Activated T-helper 2 cell treated with anti-CD3 and anti-CD28 coated beads, Interferon-gamma antibody, Interleukin-2, Interleukin-4, amounts not matched to agents 10 μg/mL and 5 μg/mL and 100 μg/mL, durations not matched to agents 14 hours and 24 hours and 36 hours (primary cell): ENCODE measurements at regions of chr6 and their contacts with region 1.

Region 1: DNA sequence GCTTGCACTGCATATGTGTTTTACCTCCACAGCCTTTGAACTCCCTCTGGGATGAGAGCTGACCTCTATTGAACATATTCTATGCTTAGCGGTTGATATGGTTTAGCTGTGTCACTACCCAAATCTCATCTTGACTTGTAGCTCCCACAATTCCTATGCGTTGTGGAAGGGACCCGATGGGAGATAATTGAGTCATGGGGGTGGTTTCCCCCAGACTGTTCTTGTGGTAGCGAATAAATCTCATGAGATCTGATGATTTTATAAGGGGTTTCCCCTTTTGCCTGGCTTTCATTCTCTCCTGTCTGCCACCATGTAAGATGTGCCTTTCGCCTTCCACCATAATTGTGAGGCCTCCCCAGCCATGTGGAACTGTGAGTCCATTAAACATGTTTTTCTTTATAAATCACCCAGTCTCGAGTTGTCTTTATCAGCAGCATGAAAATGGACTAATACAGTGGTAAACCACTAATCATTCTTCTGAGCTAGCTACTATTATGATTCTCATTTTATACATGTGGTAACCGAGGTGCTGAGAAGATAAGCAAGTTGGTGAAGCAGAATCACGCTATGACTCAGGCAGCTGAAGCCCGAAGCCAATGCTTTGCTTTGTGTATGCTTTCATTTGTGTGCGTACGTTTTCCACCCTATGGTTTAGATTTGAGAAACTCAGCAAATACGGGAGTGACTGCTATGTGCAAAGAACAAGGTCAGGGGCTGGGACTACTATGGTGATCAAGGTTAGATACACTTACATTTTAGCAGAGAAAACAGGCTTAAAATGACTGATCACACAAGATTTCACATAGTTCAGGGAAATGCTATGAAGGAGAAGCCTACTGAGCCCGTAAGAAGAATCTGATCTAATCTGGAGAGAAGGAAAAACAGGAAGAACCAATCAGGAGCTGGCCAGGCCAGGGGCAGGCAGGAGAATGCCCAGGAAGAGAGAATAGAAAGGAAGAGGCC is 363.5 kb downstream of the ESR1 start:
- DNase-seq: peak; percentile 68
- H3K4me3 Mint-ChIP-seq: peak overlapping the region; percentile 38
- H3K27ac Mint-ChIP-seq: peak overlapping the region; percentile 93
- H3K4me1 Mint-ChIP-seq: peaks cover 27% of the 10 kb centered on the region
- H3K27me3 Mint-ChIP-seq: no peaks in the 10 kb centered on the region

Region 2: DNA sequence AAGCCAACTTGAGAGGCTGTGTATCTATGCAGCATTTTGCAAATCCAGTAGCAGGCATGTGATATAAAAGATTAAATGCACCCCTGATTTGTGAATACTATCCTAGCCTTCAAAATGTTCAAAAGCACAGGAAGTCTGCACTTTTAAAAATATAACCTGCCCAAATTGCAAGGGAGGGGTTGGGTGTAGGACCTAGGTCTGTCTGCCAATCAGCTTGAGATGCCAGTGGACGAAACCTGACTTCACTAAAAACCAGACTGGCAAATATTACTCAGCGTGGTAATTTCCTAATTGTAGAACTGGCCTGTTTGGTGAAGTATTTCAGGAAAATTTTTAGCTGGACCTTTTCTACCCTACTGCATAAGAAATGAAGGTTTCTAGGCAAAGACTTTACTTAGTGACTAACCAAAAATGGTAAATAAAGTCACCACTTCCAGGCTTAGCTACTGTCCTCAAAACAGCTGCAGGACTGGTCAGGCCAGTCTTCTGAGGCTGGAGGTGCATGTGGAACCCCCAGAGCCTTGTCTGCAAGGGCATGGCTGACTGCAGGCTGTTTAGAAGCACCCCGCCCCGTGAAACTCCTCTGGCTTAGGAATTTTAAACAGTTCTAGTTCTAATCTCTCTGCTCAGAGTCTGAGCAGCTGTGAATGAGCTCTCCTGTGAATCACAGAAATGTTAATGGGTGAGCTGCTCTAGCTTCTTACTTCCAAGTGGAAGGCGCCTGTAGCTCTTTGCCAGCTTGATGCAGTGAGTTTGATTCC is 468.0 kb before region 1 on chr6:
- intact Hi-C with region 1: loop called (anchors 1 kb)
- DNase-seq: no peak
- H3K4me3 Mint-ChIP-seq: no peak overlapping the region
- H3K27ac Mint-ChIP-seq: no peak overlapping the region
- H3K4me1 Mint-ChIP-seq: peaks cover 25% of the 10 kb centered on the region
- H3K27me3 Mint-ChIP-seq: peaks cover 21% of the 10 kb centered on the region

Region 3: DNA sequence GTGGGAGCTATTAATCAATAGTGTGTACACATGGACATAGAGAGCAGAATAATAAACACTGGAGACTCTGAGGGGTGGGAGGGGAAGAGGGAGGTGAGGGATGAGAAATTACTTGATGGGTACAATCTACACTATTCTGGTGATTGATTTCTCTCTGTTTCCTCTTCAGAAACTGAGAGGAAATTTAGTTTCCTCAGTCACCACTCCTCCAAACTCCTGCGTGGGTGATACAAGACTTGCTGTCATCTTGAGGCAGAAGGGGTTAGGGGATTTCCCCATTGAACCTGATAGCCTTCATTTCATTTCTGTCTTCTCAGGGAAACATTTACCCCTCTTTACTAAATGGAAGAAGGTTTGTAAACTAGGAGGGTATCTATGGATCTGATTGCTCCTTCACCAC is 447.8 kb before region 1 on chr6:
- intact Hi-C with region 1: loop called (anchors 2 kb)
- DNase-seq: no peak
- H3K4me3 Mint-ChIP-seq: no peak overlapping the region
- H3K27ac Mint-ChIP-seq: no peak overlapping the region
- H3K4me1 Mint-ChIP-seq: peaks cover 21% of the 10 kb centered on the region
- H3K27me3 Mint-ChIP-seq: peaks cover 20% of the 10 kb centered on the region

Region 4: GRCh38 chr6:151757506-151758245 is 413.3 kb before region 1 on chr6:
- intact Hi-C with region 1: loop called (anchors 1 kb)
- DNase-seq: peak; percentile 19
- H3K4me3 Mint-ChIP-seq: no peak overlapping the region
- H3K27ac Mint-ChIP-seq: peak overlapping the region; percentile 41
- H3K4me1 Mint-ChIP-seq: peaks cover 33% of the 10 kb centered on the region
- H3K27me3 Mint-ChIP-seq: peaks cover 5% of the 10 kb centered on the region

Region 5: DNA sequence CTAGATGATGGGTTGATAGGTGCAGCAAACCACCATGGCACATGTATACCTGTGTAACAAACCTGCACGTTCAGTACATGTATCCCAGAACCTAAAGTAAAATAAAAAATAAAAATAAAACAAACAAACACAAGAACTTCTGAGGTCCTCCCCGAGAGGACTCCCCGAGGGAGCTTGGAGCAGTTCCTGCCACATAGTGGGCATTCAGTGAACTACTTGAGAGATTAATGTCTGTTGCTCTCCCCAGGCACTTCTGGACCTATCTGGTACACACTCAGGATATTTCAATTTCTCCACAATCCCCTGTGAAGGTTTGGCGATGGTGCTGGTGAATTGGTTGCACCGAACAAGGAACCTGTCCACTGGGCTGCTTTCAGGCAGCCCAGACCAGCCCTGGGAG is 52.3 kb before region 1 on chr6:
- intact Hi-C with region 1: no loop called
- DNase-seq: no peak
- H3K4me3 Mint-ChIP-seq: no peak overlapping the region
- H3K27ac Mint-ChIP-seq: no peak overlapping the region
- H3K4me1 Mint-ChIP-seq: no peaks in the 10 kb centered on the region
- H3K27me3 Mint-ChIP-seq: no peaks in the 10 kb centered on the region

Region 6: DNA sequence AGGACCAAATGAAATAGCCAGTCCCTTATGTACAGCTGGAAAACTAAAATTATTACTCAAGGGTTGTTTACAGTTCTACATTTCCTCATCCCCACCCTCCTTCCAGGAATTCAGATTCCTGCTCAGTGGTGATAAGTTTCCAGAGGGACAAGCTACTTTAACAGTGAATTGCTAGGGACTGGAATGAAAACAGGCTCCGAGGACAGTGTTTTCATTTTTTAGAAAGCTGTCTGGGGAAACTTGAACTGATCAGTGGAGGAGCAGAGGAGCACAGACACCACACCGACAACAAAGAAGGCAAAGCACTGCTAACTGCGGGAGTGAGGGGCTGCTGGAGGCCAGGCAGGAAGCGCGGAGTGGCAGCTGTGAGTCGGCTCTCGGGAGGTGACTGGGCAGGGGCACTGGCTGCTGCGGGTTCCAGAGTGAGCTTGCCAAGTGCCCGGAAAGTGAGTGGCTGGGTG is 41.3 kb before region 1 on chr6:
- intact Hi-C with region 1: no loop called
- DNase-seq: no peak
- H3K4me3 Mint-ChIP-seq: no peak overlapping the region
- H3K27ac Mint-ChIP-seq: no peak overlapping the region
- H3K4me1 Mint-ChIP-seq: peaks cover 2% of the 10 kb centered on the region
- H3K27me3 Mint-ChIP-seq: no peaks in the 10 kb centered on the region

Region 7: GRCh38 chr6:152184917-152185574 is 14.1 kb after region 1 on chr6:
- intact Hi-C with region 1: loop called (anchors 1 kb)
- DNase-seq: no peak
- H3K4me3 Mint-ChIP-seq: peak overlapping the region; percentile 83
- H3K27ac Mint-ChIP-seq: peak overlapping the region; percentile 95
- H3K4me1 Mint-ChIP-seq: peaks cover 49% of the 10 kb centered on the region
- H3K27me3 Mint-ChIP-seq: no peaks in the 10 kb centered on the region

Region 8: GRCh38 chr6:152232501-152233151 is 61.6 kb after region 1 on chr6:
- intact Hi-C with region 1: loop called (anchors 1 kb)
- DNase-seq: no peak
- H3K4me3 Mint-ChIP-seq: no peak overlapping the region
- H3K27ac Mint-ChIP-seq: no peak overlapping the region
- H3K4me1 Mint-ChIP-seq: peaks cover 11% of the 10 kb centered on the region
- H3K27me3 Mint-ChIP-seq: no peaks in the 10 kb centered on the region

Region 9: DNA sequence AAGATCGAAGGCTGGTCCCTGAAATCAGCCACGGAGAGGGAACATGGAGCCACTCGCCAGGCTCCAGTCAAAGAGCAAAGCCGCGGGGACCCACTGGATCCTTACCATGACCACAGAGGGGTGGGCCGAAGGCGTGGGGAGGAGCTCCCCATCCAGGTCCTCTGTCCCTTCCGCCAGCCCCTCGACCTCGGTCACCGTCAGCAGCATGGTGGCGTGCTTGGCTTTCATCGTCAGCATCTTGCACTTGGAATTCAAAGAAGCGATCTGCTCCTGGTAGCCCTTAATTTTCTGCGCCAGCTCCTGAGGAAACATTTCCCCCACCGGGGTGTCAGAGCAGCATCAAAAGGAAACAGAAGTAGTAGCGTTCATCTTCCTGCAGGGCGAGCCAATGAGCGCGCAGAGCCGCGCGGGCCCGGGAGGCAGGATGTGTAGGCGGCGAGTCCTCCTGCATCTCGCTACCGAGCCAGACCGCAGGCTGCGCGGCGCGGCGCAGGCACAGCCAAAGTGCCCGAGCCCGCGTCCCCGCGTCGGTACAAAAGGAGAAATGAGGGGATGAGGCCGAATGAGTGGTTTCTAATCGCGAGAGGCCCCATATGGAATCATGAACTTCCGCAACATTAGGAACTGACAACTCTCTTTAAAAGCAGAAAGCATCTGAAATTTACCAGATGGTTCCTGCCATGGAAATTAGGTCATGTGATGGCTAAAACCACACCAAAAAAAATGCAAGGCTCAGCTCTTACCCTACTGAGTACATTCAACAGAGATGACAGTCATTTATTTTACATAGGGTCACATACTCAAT is 131.0 kb after region 1 on chr6:
- intact Hi-C with region 1: loop called (anchors 1 kb)
- DNase-seq: peak; percentile 86
- H3K4me3 Mint-ChIP-seq: peak overlapping the region; percentile 99
- H3K27ac Mint-ChIP-seq: peak overlapping the region; percentile 99
- H3K4me1 Mint-ChIP-seq: peaks cover 22% of the 10 kb centered on the region
- H3K27me3 Mint-ChIP-seq: no peaks in the 10 kb centered on the region